ENCODE measurements at regions of chr13 and their contacts with region 1.

Region 1: DNA sequence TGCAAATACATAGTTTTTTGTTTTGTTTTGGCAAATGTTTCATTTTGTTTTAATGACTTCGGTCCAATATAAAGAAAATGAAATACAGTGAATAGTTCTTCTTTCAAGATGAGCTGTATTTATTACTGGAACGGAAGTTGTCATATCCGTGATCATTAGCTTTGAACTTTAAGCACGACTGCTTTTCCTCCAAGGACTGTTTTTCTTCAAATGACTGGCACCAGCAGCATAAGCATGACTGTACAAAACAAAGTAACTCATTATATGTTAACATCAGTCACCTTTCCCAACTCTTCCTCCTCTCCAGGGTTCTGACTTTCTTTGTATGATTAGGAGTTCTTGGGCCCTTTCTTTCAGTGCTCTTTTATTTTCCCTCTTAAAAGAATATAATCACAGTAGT is 20.5 kb downstream of the EDNRB start:
- DNase-seq: peak; percentile 33
- ATAC-seq: peak; percentile 71
- H3K4me3 ChIP-seq: no peak overlapping the region
- H3K27ac ChIP-seq: peak overlapping the region; percentile 79
- H3K4me1 ChIP-seq: peaks cover 14% of the 10 kb centered on the region; the same call in 1 of the 2 replicates
- H3K27me3 ChIP-seq: no peaks in the 10 kb centered on the region
- CTCF ChIP-seq: no peak

Region 2: GRCh38 chr13:77779552-77780272 is 118.4 kb before region 1 on chr13:
- CTCF ChIA-PET with region 1: no interaction called
- POLR2A ChIA-PET with region 1: no interaction called
- intact Hi-C with region 1: no loop called
- DNase-seq: peak; percentile 63
- ATAC-seq: peak; percentile 70
- H3K4me3 ChIP-seq: no peak overlapping the region
- H3K27ac ChIP-seq: no peak overlapping the region
- H3K4me1 ChIP-seq: 0 out of 2 replicates have a peak, but pooled peaks cover 7% of the 10 kb centered on the region
- H3K27me3 ChIP-seq: no peaks in the 10 kb centered on the region
- CTCF ChIP-seq: peak; percentile 70

Region 3: GRCh38 chr13:77865622-77866021 is 32.5 kb before region 1 on chr13:
- CTCF ChIA-PET with region 1: no interaction called
- POLR2A ChIA-PET with region 1: no interaction called
- intact Hi-C with region 1: loop called (anchors 1 kb)
- DNase-seq: no peak
- ATAC-seq: no peak
- H3K4me3 ChIP-seq: no peak overlapping the region
- H3K27ac ChIP-seq: no peak overlapping the region
- H3K4me1 ChIP-seq: peaks cover 4% of the 10 kb centered on the region; the same call in 1 of the 2 replicates
- H3K27me3 ChIP-seq: no peaks in the 10 kb centered on the region
- CTCF ChIP-seq: no peak

Region 4: GRCh38 chr13:78015782-78016181 is 117.7 kb after region 1 on chr13:
- CTCF ChIA-PET with region 1: no interaction called
- POLR2A ChIA-PET with region 1: no interaction called
- intact Hi-C with region 1: no loop called
- DNase-seq: no peak
- ATAC-seq: no peak
- H3K4me3 ChIP-seq: no peak overlapping the region
- H3K27ac ChIP-seq: no peak overlapping the region
- H3K4me1 ChIP-seq: no peaks in the 10 kb centered on the region
- H3K27me3 ChIP-seq: no peaks in the 10 kb centered on the region
- CTCF ChIP-seq: no peak

Region 5: GRCh38 chr13:78372581-78372980 is 474.5 kb after region 1 on chr13:
- CTCF ChIA-PET with region 1: no interaction called
- POLR2A ChIA-PET with region 1: no interaction called
- intact Hi-C with region 1: no loop called
- DNase-seq: no peak
- ATAC-seq: no peak
- H3K4me3 ChIP-seq: no peak overlapping the region
- H3K27ac ChIP-seq: no peak overlapping the region
- H3K4me1 ChIP-seq: no peaks in the 10 kb centered on the region
- H3K27me3 ChIP-seq: no peaks in the 10 kb centered on the region
- CTCF ChIP-seq: no peak

Measured in PC-3 (cell line).